ENCODE measurements at regions of chr16 and their contacts with region 1.

Region 1: GRCh38 chr16:88479793-88480760 is 27.0 kb downstream of the ZFPM1 start:
- DNase-seq: peak; percentile 85
- ATAC-seq: peak; percentile 81
- H3K4me3 ChIP-seq: peak overlapping the region in 4 of 5 experiments; percentile 17 to 53 (median 28)
- H3K4me3 Mint-ChIP-seq: peak overlapping the region; percentile 85
- H3K27ac ChIP-seq: peak overlapping the region; percentile 65 to 67
- H3K27ac Mint-ChIP-seq: peak overlapping the region; percentile 95
- H3K4me1 ChIP-seq: peaks cover 32 to 61% of the 10 kb centered on the region in 2 donors
- H3K4me1 Mint-ChIP-seq: peaks cover 49% of the 10 kb centered on the region
- H3K27me3 ChIP-seq: no peaks in the 10 kb centered on the region
- H3K27me3 Mint-ChIP-seq: no peaks in the 10 kb centered on the region
- CTCF ChIP-seq: no peak

Region 2: DNA sequence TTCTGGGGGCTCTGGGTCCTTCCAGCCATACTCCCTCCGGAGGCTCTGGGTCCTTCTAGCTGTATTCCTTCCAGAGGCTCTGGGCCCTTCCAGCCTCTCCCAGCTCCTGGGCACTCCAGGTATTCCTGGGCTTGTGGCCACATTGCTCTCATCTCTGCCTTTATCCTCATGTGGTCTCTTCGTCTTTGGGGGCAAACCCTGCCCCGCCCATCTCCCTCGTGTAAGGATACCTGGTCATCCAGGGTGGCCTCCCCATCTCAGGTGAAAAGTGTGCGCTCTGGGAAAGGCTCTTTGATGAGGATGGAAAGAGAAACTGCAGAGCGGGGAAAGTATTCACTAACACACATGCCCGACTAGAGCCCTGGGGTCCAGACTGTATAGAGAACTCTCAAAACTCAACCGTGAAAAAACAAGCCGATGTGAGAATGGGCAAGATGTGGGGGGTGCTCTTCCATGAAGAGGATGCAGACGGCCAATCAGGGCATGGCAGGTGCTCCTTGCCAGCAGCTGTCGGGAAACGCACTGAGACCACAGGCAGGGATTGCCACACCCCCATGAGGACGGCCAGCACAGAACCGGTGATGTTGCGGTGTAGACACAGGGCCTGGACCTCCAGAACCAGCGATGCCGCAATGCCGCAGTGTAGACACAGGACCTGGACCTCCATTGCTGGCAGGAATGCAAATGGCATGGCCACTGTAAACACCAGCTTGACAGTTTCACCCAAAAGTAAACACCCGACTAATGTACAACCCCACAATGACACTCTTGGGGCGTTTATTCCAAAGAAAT is 364.1 kb before region 1 on chr16:
- CTCF ChIA-PET with region 1: no interaction called
- POLR2A ChIA-PET with region 1: no interaction called
- intact Hi-C with region 1: no loop called
- DNase-seq: no peak
- ATAC-seq: no peak
- H3K4me3 ChIP-seq: no peak overlapping the region
- H3K4me3 Mint-ChIP-seq: peak overlapping the region; percentile 23
- H3K27ac ChIP-seq: no peak overlapping the region
- H3K27ac Mint-ChIP-seq: no peak overlapping the region
- H3K4me1 ChIP-seq: peaks cover 5 to 8% of the 10 kb centered on the region in 2 donors
- H3K4me1 Mint-ChIP-seq: peaks cover 21% of the 10 kb centered on the region
- H3K27me3 ChIP-seq: peaks cover 0 to 5% (median 0%) of the 10 kb centered on the region in 4 experiments
- H3K27me3 Mint-ChIP-seq: peaks cover 31% of the 10 kb centered on the region
- CTCF ChIP-seq: no peak

Region 3: DNA sequence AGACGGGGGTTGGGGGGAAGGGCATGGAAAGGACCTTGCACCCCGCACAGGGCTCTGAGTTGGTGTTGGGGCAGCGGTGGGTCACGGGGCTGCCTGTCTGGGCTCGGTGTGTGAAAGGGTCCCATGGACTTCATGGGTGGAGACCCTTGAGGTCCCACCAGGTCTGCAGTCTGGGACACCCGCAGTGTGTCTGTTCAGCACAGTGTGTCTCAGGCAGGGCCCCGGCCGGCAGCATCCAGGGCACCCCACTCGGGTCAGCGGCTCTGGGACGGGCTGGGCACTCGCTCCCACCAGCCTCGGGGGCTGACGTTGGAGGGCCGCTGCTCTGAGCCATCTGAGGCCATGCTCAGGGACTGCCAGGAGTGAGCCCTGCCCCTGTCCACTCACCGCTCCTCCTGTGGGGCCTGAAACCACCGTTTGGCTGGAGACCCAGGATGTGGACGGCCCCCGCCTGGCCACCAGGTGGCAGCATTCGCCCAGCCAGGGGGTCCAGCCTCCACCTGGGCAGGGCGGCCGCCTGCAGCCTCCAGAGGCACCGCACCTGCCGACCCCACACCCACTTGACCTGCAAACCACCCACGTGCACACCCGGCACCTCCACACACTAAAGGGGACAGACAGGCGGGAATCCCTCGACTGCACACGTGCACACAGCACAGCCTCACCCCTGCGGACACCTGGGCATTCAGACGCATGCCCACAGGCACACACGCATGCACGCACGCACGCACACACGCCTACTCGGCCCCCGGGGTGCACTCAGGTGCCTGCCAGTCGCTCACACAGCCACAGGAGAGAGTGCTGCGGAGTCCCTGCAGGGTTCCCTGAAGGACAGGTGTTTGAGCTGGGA is 37.1 kb before region 1 on chr16:
- CTCF ChIA-PET with region 1: interaction called, 5 read pairs
- POLR2A ChIA-PET with region 1: no interaction called
- intact Hi-C with region 1: loop called (anchors 5 kb)
- DNase-seq: peak; percentile 87
- ATAC-seq: peak; percentile 88
- H3K4me3 ChIP-seq: no peak overlapping the region
- H3K4me3 Mint-ChIP-seq: peak overlapping the region; percentile 21
- H3K27ac ChIP-seq: no peak overlapping the region
- H3K27ac Mint-ChIP-seq: peak overlapping the region; percentile 74
- H3K4me1 ChIP-seq: peaks cover 7 to 9% of the 10 kb centered on the region in 2 donors
- H3K4me1 Mint-ChIP-seq: peaks cover 7% of the 10 kb centered on the region
- H3K27me3 ChIP-seq: no peaks in the 10 kb centered on the region
- H3K27me3 Mint-ChIP-seq: no peaks in the 10 kb centered on the region
- CTCF ChIP-seq: peak; percentile 95

Region 4: DNA sequence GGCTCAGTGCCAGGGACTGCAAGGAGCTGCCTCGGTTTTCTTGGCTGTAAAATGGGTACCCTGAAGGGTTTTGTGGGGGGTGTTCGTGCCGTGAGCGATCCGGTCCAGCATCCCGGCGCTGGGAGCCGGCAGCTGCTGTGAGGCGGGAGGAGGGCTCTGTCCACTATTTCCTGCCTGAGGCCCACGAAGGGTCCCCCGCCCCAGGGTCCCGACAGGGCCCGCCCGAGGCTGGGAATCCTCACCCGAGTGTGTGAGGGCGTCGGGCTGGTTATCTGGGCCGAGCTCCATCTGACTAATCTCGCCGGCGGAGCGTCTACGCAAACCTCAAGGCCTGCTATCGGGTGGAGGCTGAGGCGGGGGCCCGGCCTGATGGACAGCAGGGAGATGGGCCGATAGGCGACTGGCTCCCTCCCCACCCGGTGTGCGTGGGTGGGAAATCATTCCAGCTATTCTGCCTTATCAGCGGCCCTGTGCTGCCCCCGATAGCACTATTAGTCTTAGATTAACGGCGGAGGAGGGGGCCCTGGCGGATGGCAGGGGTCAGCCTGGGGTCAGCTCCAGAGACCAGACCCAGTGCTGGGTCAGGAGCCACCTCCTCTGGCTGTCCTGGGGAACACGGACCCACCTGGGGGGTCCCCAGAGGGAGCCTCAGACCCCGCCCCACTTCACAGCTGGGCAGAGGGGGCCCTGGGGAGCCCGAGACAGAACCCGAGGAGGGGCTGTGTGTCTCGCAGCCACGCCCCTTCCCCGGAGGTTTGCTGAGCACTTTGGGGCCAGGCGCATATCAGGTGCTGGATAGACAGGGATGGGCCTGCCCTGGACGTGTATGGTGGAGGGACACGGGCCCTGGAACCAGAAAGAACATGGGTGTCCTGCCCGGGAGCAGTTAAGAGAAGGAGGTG is 17.7 kb after region 1 on chr16:
- CTCF ChIA-PET with region 1: no interaction called
- POLR2A ChIA-PET with region 1: no interaction called
- intact Hi-C with region 1: no loop called
- DNase-seq: no peak
- ATAC-seq: no peak
- H3K4me3 ChIP-seq: no peak overlapping the region
- H3K4me3 Mint-ChIP-seq: no peak overlapping the region
- H3K27ac ChIP-seq: no peak overlapping the region
- H3K27ac Mint-ChIP-seq: no peak overlapping the region
- H3K4me1 ChIP-seq: peaks cover 0 to 6% of the 10 kb centered on the region in 2 donors
- H3K4me1 Mint-ChIP-seq: no peaks in the 10 kb centered on the region
- H3K27me3 ChIP-seq: no peaks in the 10 kb centered on the region
- H3K27me3 Mint-ChIP-seq: no peaks in the 10 kb centered on the region
- CTCF ChIP-seq: no peak

Region 5: DNA sequence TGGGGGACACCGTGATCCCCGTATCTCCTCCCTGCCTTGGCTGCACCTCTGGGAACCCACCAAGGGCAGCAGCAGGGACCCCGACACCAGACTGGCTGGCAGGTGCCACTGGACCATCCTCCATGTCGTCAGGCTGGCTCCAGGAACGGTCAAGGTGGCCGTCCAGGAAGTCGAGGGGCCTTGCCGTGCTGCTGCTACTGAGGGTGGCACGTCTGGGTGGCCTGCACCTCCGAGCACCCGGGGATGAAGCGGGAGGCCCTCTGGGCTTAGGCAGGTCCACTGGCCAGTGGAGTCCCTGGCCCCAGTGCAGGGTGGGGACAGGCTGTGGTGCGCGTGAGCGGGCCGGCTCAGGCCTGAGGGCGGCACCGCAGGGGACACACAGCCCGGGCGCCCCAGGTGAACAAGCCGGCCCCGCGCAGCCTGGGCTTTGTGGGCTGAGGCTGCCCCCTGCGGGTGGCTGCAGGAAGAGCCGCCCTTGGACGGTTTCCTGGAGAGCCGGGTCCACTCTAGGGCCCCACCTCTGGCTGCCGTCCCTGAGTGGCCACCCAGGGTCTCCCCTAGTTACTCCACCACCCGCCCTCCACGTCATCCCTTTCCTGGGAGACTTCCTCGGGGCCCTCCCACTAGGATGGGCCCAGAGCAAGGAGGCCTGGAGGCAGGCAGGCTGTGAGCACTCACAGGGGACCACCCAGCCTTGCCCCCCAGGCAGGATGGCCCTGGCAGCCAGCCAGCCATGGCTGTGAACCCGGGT is 47.3 kb after region 1 on chr16:
- CTCF ChIA-PET with region 1: interaction called, 3 read pairs
- POLR2A ChIA-PET with region 1: no interaction called
- intact Hi-C with region 1: loop called (anchors 1 kb)
- DNase-seq: peak; percentile 76
- ATAC-seq: peak; percentile 81
- H3K4me3 ChIP-seq: no peak overlapping the region
- H3K4me3 Mint-ChIP-seq: no peak overlapping the region
- H3K27ac ChIP-seq: no peak overlapping the region
- H3K27ac Mint-ChIP-seq: no peak overlapping the region
- H3K4me1 ChIP-seq: peaks cover 0 to 6% of the 10 kb centered on the region in 2 donors
- H3K4me1 Mint-ChIP-seq: peaks cover 5% of the 10 kb centered on the region
- H3K27me3 ChIP-seq: no peaks in the 10 kb centered on the region
- H3K27me3 Mint-ChIP-seq: no peaks in the 10 kb centered on the region
- CTCF ChIP-seq: peak; percentile 90